ENCODE measurements at regions of chr7 and their contacts with region 1.

Region 1: DNA sequence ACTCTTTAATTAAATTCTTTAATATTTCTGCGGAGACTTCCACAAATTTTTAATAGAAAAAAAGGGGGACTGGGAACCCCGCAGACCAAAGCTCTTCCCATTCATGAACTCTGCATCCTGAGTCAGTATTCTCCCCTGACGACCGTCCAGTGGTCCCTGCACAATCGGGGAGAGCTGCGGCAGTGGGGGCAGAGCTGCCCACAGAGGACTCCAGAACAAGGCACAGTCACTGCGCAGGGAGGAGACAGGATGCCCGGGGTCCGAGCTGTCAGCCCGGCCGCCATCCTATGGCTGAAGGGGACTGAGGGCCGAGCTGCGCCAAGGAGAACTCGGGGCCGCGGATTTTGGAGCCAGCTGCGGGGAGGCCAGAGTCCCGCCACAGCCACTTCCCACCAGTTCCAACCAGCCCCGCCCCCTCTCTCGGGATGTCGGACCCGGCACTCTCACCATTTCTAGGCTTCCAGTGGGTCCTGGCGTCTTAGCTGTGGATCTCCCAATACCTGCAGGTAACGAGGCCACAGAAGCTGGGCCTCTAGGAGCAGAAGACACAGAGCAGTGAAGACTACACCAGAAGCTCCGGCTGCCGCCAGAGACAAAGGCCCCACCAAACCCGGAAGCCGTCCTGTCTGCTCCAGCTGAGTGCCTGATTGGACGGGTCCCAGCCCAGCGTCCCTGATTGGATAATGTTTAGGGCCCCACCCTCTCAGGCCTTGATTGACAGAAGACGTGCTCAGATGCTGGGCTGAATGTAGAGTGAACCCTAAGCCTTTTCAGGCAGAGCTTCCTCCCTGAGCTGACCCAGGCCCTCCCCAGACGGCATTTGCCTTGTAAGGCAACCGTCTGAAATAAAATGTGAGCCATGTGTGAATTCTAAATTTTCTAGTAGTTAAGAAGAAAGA is at the start of gene ERV3-1:
- DNase-seq: peak; percentile 84 to 97 (median 90)
- ATAC-seq: peak; percentile 99
- H3K4me3 ChIP-seq: peak within 1 kb of the TSS; percentile 75
- H3K4me3 Mint-ChIP-seq: peak within 1 kb of the TSS; percentile 96
- H3K27ac ChIP-seq: peak within 1 kb of the TSS; percentile 49
- H3K27ac Mint-ChIP-seq: peak within 1 kb of the TSS; percentile 88
- H3K4me1 ChIP-seq: peaks cover 21% of the 10 kb centered on the region
- H3K4me1 Mint-ChIP-seq: peaks cover 45% of the 10 kb centered on the region
- H3K27me3 ChIP-seq: no peaks in the 10 kb centered on the region
- H3K27me3 Mint-ChIP-seq: no peaks in the 10 kb centered on the region
- CTCF ChIP-seq: no peak
- total RNA-seq, gene ERV3-1: 16.6 to 17.2 TPM

Region 2: GRCh38 chr7:64562626-64563275 is 443.6 kb before region 1 on chr7 and contains the start of gene ZNF680:
- CTCF ChIA-PET with region 1: no interaction called
- POLR2A ChIA-PET with region 1: interaction called, 14 read pairs
- intact Hi-C with region 1: no loop called
- DNase-seq: peak; percentile 79 to 95 (median 84)
- ATAC-seq: peak; percentile 98
- H3K4me3 ChIP-seq: peak within 1 kb of the TSS; percentile 93
- H3K4me3 Mint-ChIP-seq: peak within 1 kb of the TSS; percentile 100
- H3K27ac ChIP-seq: peak within 1 kb of the TSS; percentile 41
- H3K27ac Mint-ChIP-seq: peak within 1 kb of the TSS; percentile 88
- H3K4me1 ChIP-seq: peaks cover 21% of the 10 kb centered on the region
- H3K4me1 Mint-ChIP-seq: peaks cover 41% of the 10 kb centered on the region
- H3K27me3 ChIP-seq: no peaks in the 10 kb centered on the region
- H3K27me3 Mint-ChIP-seq: no peaks in the 10 kb centered on the region
- CTCF ChIP-seq: no peak
- total RNA-seq, gene ZNF680: 8.3 to 8.9 TPM

Region 3: DNA sequence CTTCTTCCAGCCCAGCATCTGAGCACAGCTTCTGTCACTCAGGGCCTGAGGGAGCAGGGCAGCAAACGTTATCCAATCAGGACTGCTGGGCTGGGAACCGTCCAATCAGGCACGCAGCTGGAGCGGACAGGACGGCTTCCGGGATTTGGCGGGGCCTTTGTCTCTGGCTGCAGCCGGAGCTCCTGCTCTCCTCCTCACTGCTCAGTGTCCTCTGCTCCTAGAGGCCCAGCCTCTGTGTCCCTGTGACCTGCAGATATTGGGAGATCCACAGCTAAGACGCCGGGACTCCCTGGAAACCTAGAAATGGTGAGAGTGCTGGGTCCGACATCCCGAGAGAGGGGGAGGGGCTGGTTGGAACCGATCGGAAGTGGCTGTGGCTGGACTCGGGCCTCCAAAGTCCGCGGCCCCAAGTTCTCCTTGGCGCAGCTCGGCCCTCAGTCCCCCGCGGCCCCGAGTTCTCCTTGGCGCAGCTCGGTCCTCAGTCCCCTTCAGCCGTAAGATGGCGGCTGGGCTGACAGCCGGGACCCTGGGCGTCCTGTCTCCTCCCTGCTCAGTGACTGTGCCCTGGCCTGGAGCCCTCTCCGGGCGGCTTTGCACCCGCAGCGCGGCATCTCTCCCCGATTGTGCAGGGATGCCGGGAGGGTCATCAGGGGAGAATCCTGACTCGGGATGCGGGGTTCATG is 340.2 kb before region 1 on chr7 and contains the start of gene ZNF107:
- CTCF ChIA-PET with region 1: no interaction called
- POLR2A ChIA-PET with region 1: interaction called, 15 read pairs
- intact Hi-C with region 1: loop called in 1 of 2 experiments (anchors 10 kb)
- DNase-seq: peak; percentile 71 to 96 (median 79)
- ATAC-seq: peak; percentile 95
- H3K4me3 ChIP-seq: peak within 1 kb of the TSS; percentile 83
- H3K4me3 Mint-ChIP-seq: peak within 1 kb of the TSS; percentile 98
- H3K27ac ChIP-seq: peak within 1 kb of the TSS; percentile 82
- H3K27ac Mint-ChIP-seq: peak within 1 kb of the TSS; percentile 98
- H3K4me1 ChIP-seq: peaks cover 23% of the 10 kb centered on the region
- H3K4me1 Mint-ChIP-seq: peaks cover 76% of the 10 kb centered on the region
- H3K27me3 ChIP-seq: no peaks in the 10 kb centered on the region
- H3K27me3 Mint-ChIP-seq: no peaks in the 10 kb centered on the region
- CTCF ChIP-seq: no peak
- total RNA-seq, gene ZNF107: 12.4 TPM

Region 4: GRCh38 chr7:65037740-65038678 is 31.7 kb after region 1 on chr7:
- CTCF ChIA-PET with region 1: interaction called, 8 read pairs
- POLR2A ChIA-PET with region 1: interaction called, 61 read pairs
- intact Hi-C with region 1: loop called (anchors 2 kb)
- DNase-seq: peak; percentile 88 to 98 (median 93)
- ATAC-seq: peak; percentile 87
- H3K4me3 ChIP-seq: peak overlapping the region; percentile 63
- H3K4me3 Mint-ChIP-seq: peak overlapping the region; percentile 86
- H3K27ac ChIP-seq: peak overlapping the region in 1 of 2 donors; percentile 56
- H3K27ac Mint-ChIP-seq: peak overlapping the region; percentile 57
- H3K4me1 ChIP-seq: peaks cover 5% of the 10 kb centered on the region
- H3K4me1 Mint-ChIP-seq: peaks cover 17% of the 10 kb centered on the region
- H3K27me3 ChIP-seq: no peaks in the 10 kb centered on the region
- H3K27me3 Mint-ChIP-seq: no peaks in the 10 kb centered on the region
- CTCF ChIP-seq: no peak

Region 5: GRCh38 chr7:65269150-65269856 is 263.0 kb after region 1 on chr7:
- CTCF ChIA-PET with region 1: no interaction called
- POLR2A ChIA-PET with region 1: no interaction called
- intact Hi-C with region 1: no loop called
- DNase-seq: peak in 6 of 14 experiments; percentile 2 to 28 (median 5)
- ATAC-seq: no peak
- H3K4me3 ChIP-seq: peak overlapping the region; percentile 38
- H3K4me3 Mint-ChIP-seq: peak overlapping the region; percentile 70
- H3K27ac ChIP-seq: no peak overlapping the region
- H3K27ac Mint-ChIP-seq: no peak overlapping the region
- H3K4me1 ChIP-seq: peaks cover 10% of the 10 kb centered on the region
- H3K4me1 Mint-ChIP-seq: peaks cover 13% of the 10 kb centered on the region
- H3K27me3 ChIP-seq: peaks cover 19 to 37% of the 10 kb centered on the region in 2 experiments
- H3K27me3 Mint-ChIP-seq: peaks cover 69% of the 10 kb centered on the region
- CTCF ChIP-seq: no peak